ENCODE measurements at regions of chr9 and their contacts with region 1.

Region 1: DNA sequence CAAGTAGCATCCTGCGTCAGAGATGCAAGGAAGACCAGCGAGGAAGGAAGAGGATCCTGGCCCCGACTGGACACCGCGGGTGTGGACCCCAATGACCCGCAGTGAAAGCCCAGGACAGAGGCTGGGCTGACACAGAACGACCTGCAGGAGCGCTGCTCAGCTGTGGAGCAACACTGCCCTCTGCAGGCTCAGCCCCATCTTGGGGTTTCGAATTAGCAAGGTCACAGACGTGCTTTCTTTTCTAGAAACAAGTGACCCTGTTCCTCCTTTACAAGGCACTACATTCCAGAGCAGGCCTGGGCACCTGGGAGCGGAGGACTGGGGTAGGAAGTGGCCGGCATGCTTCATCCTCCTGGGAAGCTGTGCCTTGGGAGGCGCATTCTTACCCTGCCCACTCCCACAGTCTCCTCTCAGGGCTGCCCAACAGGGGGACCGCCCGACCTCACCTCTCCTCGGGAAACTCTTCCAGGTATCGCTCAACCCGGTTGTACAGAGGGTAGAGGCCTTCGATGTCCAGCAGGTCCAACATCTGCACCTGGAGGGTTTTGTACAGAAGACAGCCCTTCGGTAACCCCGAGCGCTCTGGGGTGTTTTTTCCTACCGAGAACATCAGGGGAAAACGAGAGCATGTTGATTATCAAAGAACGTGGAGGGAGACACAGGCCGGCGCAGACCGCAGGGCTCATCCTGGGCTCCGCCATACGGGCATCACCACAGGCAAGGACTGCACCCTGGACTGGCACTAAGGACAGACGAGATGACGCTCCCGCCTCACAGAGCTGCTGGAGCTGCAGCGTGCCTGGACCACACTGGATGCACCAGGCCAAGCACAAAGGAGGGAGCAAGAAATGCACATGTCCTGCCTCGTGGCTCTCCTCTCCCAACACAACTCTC is 35.0 kb downstream of the IPPK start:
- DNase-seq: peak; percentile 64 to 70
- H3K4me3 ChIP-seq: no peak overlapping the region
- H3K4me3 Mint-ChIP-seq: no peak overlapping the region
- H3K27ac Mint-ChIP-seq: no peak overlapping the region
- H3K4me1 ChIP-seq: no peaks in the 10 kb centered on the region
- H3K4me1 Mint-ChIP-seq: no peaks in the 10 kb centered on the region
- H3K27me3 ChIP-seq: no peaks in the 10 kb centered on the region
- H3K27me3 Mint-ChIP-seq: no peaks in the 10 kb centered on the region
- CTCF ChIP-seq: peak; percentile 84 to 89

Region 2: DNA sequence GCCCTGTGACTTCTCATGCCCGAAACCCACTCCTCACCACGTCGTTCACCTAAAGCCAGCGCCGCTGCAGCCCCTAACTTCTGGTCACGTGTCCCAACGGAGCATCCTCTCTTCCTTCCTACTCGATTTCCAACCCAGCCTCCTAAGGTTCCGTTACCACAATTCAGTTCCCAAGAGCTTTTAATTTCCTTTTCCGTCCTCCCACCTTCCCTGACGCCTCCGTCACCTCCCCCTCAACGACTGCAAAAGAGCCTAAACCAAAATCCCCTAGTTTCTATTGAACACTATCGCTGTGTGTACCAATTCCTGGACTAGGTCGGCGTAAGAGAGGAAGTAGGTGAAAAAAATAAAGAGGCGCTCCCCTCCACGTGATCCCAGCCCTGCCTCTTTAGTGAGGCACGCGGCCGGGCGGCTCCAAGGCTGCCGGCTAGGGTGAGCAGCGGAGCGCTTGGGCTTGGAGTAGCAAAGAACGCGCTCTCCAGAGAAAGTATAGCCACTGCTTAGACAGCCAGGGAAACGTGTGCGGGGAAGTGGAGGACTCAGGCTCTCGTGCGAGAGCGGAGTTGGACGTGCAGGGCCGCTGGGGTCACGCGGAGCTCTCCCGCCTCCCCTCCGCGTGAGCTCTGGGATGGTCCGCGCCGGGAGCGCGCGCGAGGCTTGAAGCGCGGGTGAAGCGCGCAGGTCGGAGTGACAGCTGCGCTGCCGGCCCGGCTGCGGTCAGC is 309.5 kb before region 1 on chr9 and contains the starts of genes CENPP and NOL8:
- CTCF ChIA-PET with region 1: interaction called, 3 read pairs
- POLR2A ChIA-PET with region 1: no interaction called
- intact Hi-C with region 1: loop called (anchors 5 kb)
- DNase-seq: peak; percentile 80
- H3K4me3 ChIP-seq: peak within 1 kb of the TSS; percentile 93
- H3K4me3 Mint-ChIP-seq: peak within 1 kb of the TSS; percentile 96
- H3K27ac Mint-ChIP-seq: peak within 1 kb of the TSS; percentile 98
- H3K4me1 ChIP-seq: no peaks in the 10 kb centered on the region
- H3K4me1 Mint-ChIP-seq: peaks cover 6% of the 10 kb centered on the region
- H3K27me3 ChIP-seq: no peaks in the 10 kb centered on the region
- H3K27me3 Mint-ChIP-seq: no peaks in the 10 kb centered on the region
- CTCF ChIP-seq: no peak
- total RNA-seq, gene CENPP: 7.6 and 7.8 TPM in 2 replicates
- total RNA-seq, gene NOL8: 22.3 and 29.4 TPM in 2 replicates

Region 3: DNA sequence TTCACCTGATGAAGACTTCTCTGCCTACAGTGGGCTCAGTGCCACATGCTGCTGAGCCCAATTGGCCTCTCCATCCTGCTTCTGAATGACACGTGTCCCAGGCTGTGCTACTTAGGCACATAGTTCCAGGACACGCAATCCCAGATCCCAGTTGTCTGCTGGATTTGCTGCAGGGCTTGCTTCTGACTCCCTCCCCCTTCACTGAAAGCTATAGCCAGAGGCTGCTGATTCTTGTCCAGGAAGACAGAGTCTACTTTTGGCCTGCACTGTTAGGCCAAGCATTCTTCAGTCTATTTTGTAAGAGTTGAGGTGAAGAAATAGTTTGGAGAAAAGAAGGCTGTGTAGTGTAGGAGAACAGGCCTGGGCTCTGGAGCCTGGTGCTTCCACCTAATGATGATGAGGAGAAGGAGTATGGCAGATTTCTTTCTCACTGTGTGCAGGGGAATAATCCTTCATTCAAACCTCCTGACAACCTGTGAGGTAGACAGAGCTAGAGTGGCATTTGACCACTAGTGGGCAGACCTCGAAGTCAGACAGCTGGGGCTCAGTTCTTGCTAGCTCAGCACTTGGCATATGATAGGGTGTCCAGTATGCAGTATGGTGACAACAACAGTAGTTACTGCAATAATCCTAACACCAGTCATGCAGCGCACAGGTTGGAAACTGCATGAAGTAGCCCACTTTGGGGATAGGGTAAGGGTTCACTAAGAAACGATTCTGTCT is 133.1 kb before region 1 on chr9:
- CTCF ChIA-PET with region 1: interaction called, 3 read pairs
- POLR2A ChIA-PET with region 1: no interaction called
- intact Hi-C with region 1: loop called (anchors 2 kb)
- DNase-seq: peak; percentile 33 to 45
- H3K4me3 ChIP-seq: no peak overlapping the region
- H3K4me3 Mint-ChIP-seq: no peak overlapping the region
- H3K27ac Mint-ChIP-seq: no peak overlapping the region
- H3K4me1 ChIP-seq: no peaks in the 10 kb centered on the region
- H3K4me1 Mint-ChIP-seq: peaks cover 11% of the 10 kb centered on the region
- H3K27me3 ChIP-seq: no peaks in the 10 kb centered on the region
- H3K27me3 Mint-ChIP-seq: no peaks in the 10 kb centered on the region
- CTCF ChIP-seq: peak; percentile 15 to 60

Region 4: DNA sequence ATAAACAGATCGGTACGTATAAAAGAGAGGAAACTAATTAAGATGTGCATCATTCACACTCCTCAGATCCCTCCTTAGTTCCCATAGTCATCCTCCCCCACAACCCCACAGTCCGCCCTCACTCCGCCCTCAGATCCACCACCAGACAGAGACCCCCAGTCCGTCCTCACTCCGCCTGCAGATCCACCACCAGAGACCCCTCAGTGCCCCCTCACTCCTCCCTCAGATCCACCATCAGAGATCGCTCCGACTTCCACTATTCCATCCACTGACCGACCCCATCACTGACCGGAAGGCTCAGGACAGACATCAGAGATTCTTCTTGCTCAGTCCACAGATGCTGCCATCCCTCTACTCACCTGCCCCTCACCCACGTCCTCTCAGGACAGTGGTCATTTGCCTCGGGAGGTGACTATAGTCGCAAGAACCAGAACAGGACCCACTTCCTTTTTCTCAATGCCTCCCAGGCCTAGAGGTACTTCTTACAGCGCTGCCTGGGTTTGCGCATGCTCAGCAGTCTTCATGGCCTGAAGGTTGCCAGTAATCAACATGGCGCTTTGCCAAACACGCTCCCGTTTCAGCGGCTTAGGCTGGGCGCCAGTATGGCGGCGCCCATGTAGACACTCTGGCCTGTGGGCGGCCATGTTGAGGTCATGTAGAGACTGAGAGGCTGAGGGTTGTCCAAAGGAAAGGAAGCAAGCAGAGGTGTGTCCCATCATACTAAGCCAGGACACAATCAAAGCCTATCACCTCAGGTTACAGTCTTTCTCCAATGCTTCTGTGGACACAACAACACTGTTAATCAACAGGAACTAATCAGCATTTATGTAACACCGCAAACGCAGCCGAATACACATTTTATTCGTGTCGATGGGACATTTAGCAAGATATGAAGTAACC is 242.8 kb after region 1 on chr9 and contains the start of gene ZNF484:
- CTCF ChIA-PET with region 1: no interaction called
- POLR2A ChIA-PET with region 1: no interaction called
- intact Hi-C with region 1: no loop called
- DNase-seq: peak; percentile 87 to 94
- H3K4me3 ChIP-seq: peak within 1 kb of the TSS; percentile 65
- H3K4me3 Mint-ChIP-seq: peak within 1 kb of the TSS; percentile 93
- H3K27ac Mint-ChIP-seq: peak within 1 kb of the TSS; percentile 93
- H3K4me1 ChIP-seq: no peaks in the 10 kb centered on the region
- H3K4me1 Mint-ChIP-seq: no peaks in the 10 kb centered on the region
- H3K27me3 ChIP-seq: no peaks in the 10 kb centered on the region
- H3K27me3 Mint-ChIP-seq: no peaks in the 10 kb centered on the region
- CTCF ChIP-seq: no peak
- total RNA-seq, gene ZNF484: 3.3 and 3.6 TPM in 2 replicates